ENCODE measurements at regions of chr1 and their contacts with region 1.

Region 1: DNA sequence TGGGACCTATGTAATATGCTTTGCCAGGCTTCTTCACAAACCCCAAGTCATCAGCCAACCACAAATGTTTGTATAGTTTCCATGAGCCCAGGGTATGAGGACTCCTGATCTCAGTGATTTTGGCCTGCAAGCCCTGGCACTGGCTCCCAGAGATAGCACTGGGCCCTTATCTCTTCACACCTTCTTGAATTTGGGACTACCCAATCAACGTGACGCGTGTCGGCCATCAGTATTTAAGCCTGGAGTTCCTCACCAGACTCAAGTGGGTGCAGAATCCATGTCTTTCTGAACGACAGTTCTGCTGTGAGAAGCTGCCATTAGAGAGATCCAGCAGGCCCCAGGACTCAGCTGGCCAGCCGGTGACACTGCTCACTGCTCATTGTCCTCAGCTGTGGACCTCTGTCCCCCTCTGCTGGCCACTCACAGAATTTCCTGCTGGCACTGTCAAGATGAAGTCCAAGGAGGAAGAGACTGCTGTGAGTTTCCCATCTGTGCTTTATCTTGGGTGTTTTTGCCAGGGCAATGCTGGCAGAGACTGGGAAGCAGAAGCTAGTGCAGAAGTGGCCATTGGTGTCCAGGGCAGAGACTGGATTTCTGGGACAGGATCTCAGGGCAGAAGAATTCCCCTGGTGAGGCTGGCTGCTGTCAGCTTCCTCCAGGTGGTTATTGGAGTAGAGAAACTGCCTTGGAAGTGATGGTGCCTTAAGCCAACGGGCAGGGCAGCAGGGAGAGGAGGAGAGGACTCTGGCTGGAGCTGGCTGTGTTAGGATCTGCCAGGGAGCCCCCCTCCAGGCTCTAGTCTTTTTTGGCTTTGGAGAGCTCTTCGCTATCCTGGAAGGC is 28.4 kb downstream of the TMCC2 start:
- DNase-seq: peak; percentile 61 to 95
- H3K4me3 ChIP-seq: no peak overlapping the region
- H3K27ac ChIP-seq: no peak overlapping the region
- H3K4me1 ChIP-seq: peaks cover 3 to 7% (median 4%) of the 10 kb centered on the region in 4 experiments; a peak in 4 of 7 replicates
- H3K27me3 ChIP-seq: no peaks in the 10 kb centered on the region
- CTCF ChIP-seq: peak; percentile 93 to 98 (median 98)
- EP300 ChIP-seq: no peak
- POLR2A ChIP-seq: no peak
- RAD21 ChIP-seq: peak; percentile 100

Region 2: GRCh38 chr1:204989266-204990058 is 266.7 kb before region 1 on chr1:
- CTCF ChIA-PET with region 1: interaction called, 41 read pairs
- POLR2A ChIA-PET with region 1: no interaction called
- DNase-seq: peak; percentile 70 to 90
- H3K4me3 ChIP-seq: no peak overlapping the region
- H3K27ac ChIP-seq: no peak overlapping the region
- H3K4me1 ChIP-seq: peaks cover 10 to 27% (median 19%) of the 10 kb centered on the region in 4 experiments
- H3K27me3 ChIP-seq: no peaks in the 10 kb centered on the region; a peak in 1 of 7 replicates
- CTCF ChIP-seq: peak; percentile 98 to 100 (median 98)
- EP300 ChIP-seq: no peak
- POLR2A ChIP-seq: no peak
- RAD21 ChIP-seq: peak; percentile 100

Region 3: DNA sequence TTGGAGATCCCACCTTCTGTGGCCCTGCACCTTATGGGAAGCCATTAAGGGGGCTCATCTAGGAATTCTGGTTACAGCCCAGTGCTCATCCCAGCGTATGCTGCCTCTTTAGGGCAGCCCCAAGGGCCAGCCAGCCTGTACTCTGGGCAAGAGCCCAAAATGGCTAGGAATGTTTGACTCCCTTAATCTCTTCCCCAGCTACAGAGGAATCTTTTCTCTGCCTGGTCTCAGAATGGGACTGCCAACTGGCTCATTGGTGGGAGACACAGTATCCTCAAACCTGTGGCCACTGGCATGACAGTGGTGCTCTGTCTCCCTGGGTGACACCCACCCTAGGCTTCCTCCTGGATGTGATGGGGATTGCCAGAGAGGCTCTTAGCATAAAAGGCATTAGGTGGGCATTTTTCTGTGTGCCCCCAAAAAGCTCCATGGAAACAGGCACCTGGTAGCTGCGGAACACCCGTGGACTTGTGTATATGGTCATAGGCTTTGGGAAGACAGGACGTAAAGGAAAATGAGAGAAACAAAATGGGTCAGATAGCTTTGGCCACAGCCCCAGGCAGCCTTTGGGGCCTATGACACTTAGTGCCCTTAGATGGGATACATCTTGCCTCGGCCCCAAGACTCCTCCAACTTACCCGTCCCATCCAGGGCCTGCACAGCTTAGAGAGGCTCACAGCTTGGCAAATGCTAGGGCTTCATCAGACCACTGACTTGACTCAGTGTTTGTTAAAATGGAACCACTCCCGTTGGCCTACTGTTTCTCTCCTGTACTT is 178.8 kb before region 1 on chr1:
- CTCF ChIA-PET with region 1: interaction called, 15 read pairs
- POLR2A ChIA-PET with region 1: no interaction called
- DNase-seq: no peak
- H3K4me3 ChIP-seq: no peak overlapping the region
- H3K27ac ChIP-seq: no peak overlapping the region
- H3K4me1 ChIP-seq: no peaks in the 10 kb centered on the region
- H3K27me3 ChIP-seq: no peaks in the 10 kb centered on the region
- CTCF ChIP-seq: no peak
- EP300 ChIP-seq: no peak
- POLR2A ChIP-seq: no peak
- RAD21 ChIP-seq: no peak

Region 4: DNA sequence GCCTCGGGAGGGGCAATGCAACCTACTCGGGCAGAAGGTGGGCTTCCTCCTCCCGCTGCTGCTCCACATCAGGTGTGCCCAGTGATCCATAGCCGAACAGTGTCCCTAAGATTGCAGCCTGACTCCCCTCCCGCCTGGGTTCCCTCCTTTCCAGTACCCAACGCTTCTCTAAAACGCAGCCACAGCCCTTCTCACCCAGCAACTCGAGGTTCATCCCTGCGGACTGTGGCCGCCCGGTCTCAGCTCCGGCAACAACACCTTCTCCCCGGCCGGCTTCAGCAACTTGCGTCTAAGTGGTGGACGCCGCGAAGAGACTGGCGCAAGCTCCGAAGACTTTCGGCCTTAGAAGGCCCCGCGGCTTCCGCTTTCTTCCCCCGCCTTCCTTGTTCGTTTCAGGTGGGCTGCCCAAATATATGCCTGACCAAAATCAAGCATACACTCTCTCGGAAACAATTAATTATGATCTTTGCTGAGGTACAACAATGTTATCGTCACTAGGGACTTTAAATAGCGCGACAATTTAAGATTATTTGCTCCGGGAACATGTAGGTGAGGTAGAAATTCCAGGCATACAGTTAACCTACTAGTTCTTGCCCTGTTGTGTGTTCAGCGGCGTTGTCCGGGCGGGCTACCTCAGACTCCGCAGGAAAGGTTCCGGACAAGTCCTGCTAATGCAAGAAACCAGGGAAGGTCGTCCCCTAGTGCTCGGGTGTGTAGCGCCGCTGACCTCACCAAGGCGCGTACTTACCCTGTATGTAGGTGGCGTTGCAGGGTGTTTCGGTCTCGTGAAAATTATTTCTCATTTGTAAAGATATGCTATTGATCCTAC is 134.3 kb before region 1 on chr1 and contains the start of gene RBBP5:
- CTCF ChIA-PET with region 1: interaction called, 46 read pairs
- POLR2A ChIA-PET with region 1: interaction called, 3 read pairs
- DNase-seq: peak; percentile 96
- H3K4me3 ChIP-seq: peak within 1 kb of the TSS; percentile 89 to 100 (median 97)
- H3K27ac ChIP-seq: peak within 1 kb of the TSS; percentile 98
- H3K4me1 ChIP-seq: peaks cover 0 to 9% (median 5%) of the 10 kb centered on the region in 4 experiments; a peak in 3 of 7 replicates
- H3K27me3 ChIP-seq: no peaks in the 10 kb centered on the region
- CTCF ChIP-seq: peak; percentile 85 to 91 (median 86)
- EP300 ChIP-seq: peak in 1 of 2 experiments; percentile 91; a peak in 1 of 3 replicates
- POLR2A ChIP-seq: peak; percentile 80 to 91
- RAD21 ChIP-seq: peak; percentile 55
- total RNA-seq, gene RBBP5: 20.4 and 21.5 TPM in 2 replicates

Region 5: GRCh38 chr1:205158048-205158616 is 98.0 kb before region 1 on chr1:
- CTCF ChIA-PET with region 1: interaction called, 12 read pairs
- POLR2A ChIA-PET with region 1: no interaction called
- DNase-seq: no peak
- H3K4me3 ChIP-seq: no peak overlapping the region
- H3K27ac ChIP-seq: no peak overlapping the region
- H3K4me1 ChIP-seq: no peaks in the 10 kb centered on the region
- H3K27me3 ChIP-seq: no peaks in the 10 kb centered on the region
- CTCF ChIP-seq: no peak
- EP300 ChIP-seq: no peak
- POLR2A ChIP-seq: no peak
- RAD21 ChIP-seq: no peak

Measured in H1 (cell line).